ENCODE measurements at regions of chr14 and their contacts with region 1.

Region 1: DNA sequence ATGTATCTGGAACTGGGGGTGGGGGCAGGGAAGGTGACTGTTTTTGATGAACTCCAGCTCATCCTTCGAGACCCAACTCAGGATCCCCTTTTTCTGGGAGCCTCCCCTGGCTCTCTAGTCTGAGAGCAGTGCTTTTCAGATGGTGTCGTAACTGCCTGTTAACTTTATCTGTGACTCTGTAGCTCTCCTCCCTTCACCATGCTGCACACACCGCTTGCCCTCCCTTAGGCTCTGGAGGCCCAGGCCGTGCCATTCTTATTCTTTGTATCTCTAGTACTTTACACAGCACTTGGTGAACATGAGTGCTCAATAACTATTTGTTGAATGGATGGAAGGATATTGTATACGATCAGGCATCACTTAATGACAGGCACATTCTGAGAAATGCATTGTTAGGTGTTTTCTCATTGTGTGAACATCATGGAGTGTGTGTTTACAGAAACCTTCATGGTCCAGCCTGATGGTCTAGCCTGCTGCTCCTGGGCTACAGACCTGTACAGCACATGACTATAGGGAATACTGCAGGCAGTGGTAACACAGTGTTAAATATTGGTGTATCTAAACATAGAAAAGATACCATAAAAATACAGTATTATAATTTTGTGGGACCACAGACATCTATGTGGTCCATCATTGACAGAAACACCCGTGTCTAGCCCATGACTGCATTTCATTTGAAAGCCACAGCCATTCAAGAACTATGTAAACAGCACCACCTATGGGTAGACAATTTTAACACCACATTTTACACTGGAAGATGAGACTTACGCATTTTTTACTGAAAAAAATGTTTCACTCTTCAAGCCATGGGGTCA is 91.8 kb downstream of the EML1 start:
- DNase-seq: peak; percentile 52
- ATAC-seq: peak; percentile 82
- H3K4me3 ChIP-seq: no peak overlapping the region
- H3K27ac ChIP-seq: no peak overlapping the region
- H3K4me1 ChIP-seq: no peaks in the 10 kb centered on the region
- H3K27me3 ChIP-seq: no peaks in the 10 kb centered on the region; a peak in 1 of 5 replicates
- CTCF ChIP-seq: peak; percentile 79
- EP300 ChIP-seq: no peak
- POLR2A ChIP-seq: no peak
- RAD21 ChIP-seq: peak; percentile 70

Region 2: GRCh38 chr14:99524804-99525698 is 360.0 kb before region 1 on chr14:
- CTCF ChIA-PET with region 1: no interaction called
- POLR2A ChIA-PET with region 1: no interaction called
- in situ Hi-C with region 1: loop called (anchors 10 kb)
- intact Hi-C with region 1: no loop called
- DNase-seq: no peak
- ATAC-seq: peak; percentile 41
- H3K4me3 ChIP-seq: no peak overlapping the region
- H3K27ac ChIP-seq: no peak overlapping the region
- H3K4me1 ChIP-seq: peaks cover 21% of the 10 kb centered on the region
- H3K27me3 ChIP-seq: no peaks in the 10 kb centered on the region
- CTCF ChIP-seq: peak; percentile 64
- EP300 ChIP-seq: no peak
- POLR2A ChIP-seq: no peak
- RAD21 ChIP-seq: no peak

Region 3: GRCh38 chr14:99683619-99684355 is 201.3 kb before region 1 on chr14 and contains the start of gene CYP46A1:
- CTCF ChIA-PET with region 1: interaction called, 15 read pairs
- POLR2A ChIA-PET with region 1: interaction called, 3 read pairs
- in situ Hi-C with region 1: loop called (anchors 5 kb)
- intact Hi-C with region 1: loop called (anchors 1 kb)
- DNase-seq: peak; percentile 94
- ATAC-seq: peak; percentile 83
- H3K4me3 ChIP-seq: peak within 1 kb of the TSS; percentile 85 to 97 (median 86)
- H3K27ac ChIP-seq: peak within 1 kb of the TSS; percentile 42
- H3K4me1 ChIP-seq: peaks cover 16% of the 10 kb centered on the region
- H3K27me3 ChIP-seq: peaks cover 3 to 13% of the 10 kb centered on the region in 2 experiments; a peak in 3 of 5 replicates
- CTCF ChIP-seq: no peak
- EP300 ChIP-seq: no peak
- POLR2A ChIP-seq: peak; percentile 35 to 54; a peak in 2 of 4 replicates
- RAD21 ChIP-seq: no peak; the same call in 1 of the 2 replicates
- total RNA-seq, gene CYP46A1: not detected in 2 replicates

Region 4: GRCh38 chr14:99729991-99730868 is 154.8 kb before region 1 on chr14:
- CTCF ChIA-PET with region 1: interaction called, 26 read pairs
- POLR2A ChIA-PET with region 1: no interaction called
- in situ Hi-C with region 1: loop called (anchors 5 kb)
- intact Hi-C with region 1: loop called (anchors 1 kb)
- DNase-seq: peak; percentile 93
- ATAC-seq: peak; percentile 90
- H3K4me3 ChIP-seq: peak overlapping the region; percentile 51 to 71 (median 63); a peak in 5 of 6 replicates
- H3K27ac ChIP-seq: peak overlapping the region; percentile 65
- H3K4me1 ChIP-seq: peaks cover 49% of the 10 kb centered on the region
- H3K27me3 ChIP-seq: peaks cover 8 to 43% of the 10 kb centered on the region in 2 experiments
- CTCF ChIP-seq: peak; percentile 83
- EP300 ChIP-seq: peak; percentile 26 to 32; a peak in 1 of 4 replicates
- POLR2A ChIP-seq: 0 out of 4 replicates have a peak, but pooled peaks of 1 of the 2 experiments have one; percentile 14
- RAD21 ChIP-seq: peak; percentile 96

Region 5: GRCh38 chr14:99807413-99808153 is 77.5 kb before region 1 on chr14:
- CTCF ChIA-PET with region 1: no interaction called
- POLR2A ChIA-PET with region 1: no interaction called
- in situ Hi-C with region 1: no loop called
- intact Hi-C with region 1: no loop called
- DNase-seq: no peak
- ATAC-seq: peak; percentile 97
- H3K4me3 ChIP-seq: no peak overlapping the region
- H3K27ac ChIP-seq: no peak overlapping the region
- H3K4me1 ChIP-seq: peaks cover 9% of the 10 kb centered on the region; the same call in 1 of the 2 replicates
- H3K27me3 ChIP-seq: no peaks in the 10 kb centered on the region
- CTCF ChIP-seq: no peak
- EP300 ChIP-seq: no peak
- POLR2A ChIP-seq: no peak
- RAD21 ChIP-seq: no peak

Measured in HepG2 (cell line).